T-cell (primary cell): ENCODE measurements at regions of chr1 and their contacts with region 1.

Region 1: GRCh38 chr1:248858891-248859889 is at the start of gene ZNF692:
- DNase-seq: peak; percentile 94 to 98 (median 97)
- ATAC-seq: peak; percentile 86 to 89 (median 87)
- H3K4me3 ChIP-seq: peak within 1 kb of the TSS; percentile 72 to 73
- H3K4me3 Mint-ChIP-seq: peak within 1 kb of the TSS; percentile 87 to 93 (median 93)
- H3K27ac ChIP-seq: peak within 1 kb of the TSS; percentile 88
- H3K27ac Mint-ChIP-seq: peak within 1 kb of the TSS; percentile 96 to 98
- H3K4me1 ChIP-seq: peaks cover 21 to 61% of the 10 kb centered on the region in 2 experiments
- H3K4me1 Mint-ChIP-seq: peaks cover 58 to 66% (median 61%) of the 10 kb centered on the region in 3 donors
- H3K27me3 ChIP-seq: no peaks in the 10 kb centered on the region
- H3K27me3 Mint-ChIP-seq: no peaks in the 10 kb centered on the region
- total RNA-seq, gene ZNF692: 53.9 to 88.1 (median 78.7) TPM

Region 2: DNA sequence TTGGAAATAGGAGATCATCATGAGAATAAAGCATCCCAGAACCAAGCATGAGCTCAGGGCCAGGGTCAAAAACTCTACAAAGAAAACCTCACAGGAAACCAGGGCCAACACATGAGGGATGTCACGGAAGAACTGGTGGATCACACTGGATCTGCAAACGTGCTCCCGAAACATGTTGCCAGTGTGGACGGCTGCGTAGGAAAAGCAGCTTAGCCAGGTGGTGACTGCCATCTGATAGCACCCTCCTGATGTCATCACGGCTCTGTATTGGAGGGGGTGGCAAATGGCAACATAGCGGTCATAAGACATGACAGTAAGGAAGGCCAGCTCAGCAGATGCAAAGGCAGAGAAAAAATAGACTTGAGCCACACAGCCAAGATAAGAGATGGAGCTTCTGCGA is 177.5 kb before region 1 on chr1:
- CTCF ChIA-PET with region 1: no interaction called
- POLR2A ChIA-PET with region 1: no interaction called
- DNase-seq: no peak
- ATAC-seq: no peak
- H3K4me3 ChIP-seq: no peak overlapping the region
- H3K4me3 Mint-ChIP-seq: no peak overlapping the region
- H3K27ac ChIP-seq: no peak overlapping the region
- H3K27ac Mint-ChIP-seq: no peak overlapping the region
- H3K4me1 ChIP-seq: no peaks in the 10 kb centered on the region
- H3K4me1 Mint-ChIP-seq: peaks cover under 1 to 2% (median under 1%) of the 10 kb centered on the region in 3 donors
- H3K27me3 ChIP-seq: peaks cover 0 to 9% of the 10 kb centered on the region in 2 experiments
- H3K27me3 Mint-ChIP-seq: peaks cover 9 to 21% of the 10 kb centered on the region in 2 donors

Region 3: GRCh38 chr1:248837794-248838356 is 21.3 kb before region 1 on chr1 and contains the start of gene ZNF672:
- CTCF ChIA-PET with region 1: interaction called in 1 of 2 experiments, 19 read pairs
- POLR2A ChIA-PET with region 1: interaction called, 4 to 6 read pairs
- DNase-seq: peak; percentile 85 to 94 (median 91)
- ATAC-seq: peak; percentile 86 to 90 (median 86)
- H3K4me3 ChIP-seq: peak within 1 kb of the TSS; percentile 79 to 87
- H3K4me3 Mint-ChIP-seq: no peak within 1 kb of the TSS
- H3K27ac ChIP-seq: peak within 1 kb of the TSS; percentile 97
- H3K27ac Mint-ChIP-seq: peak within 1 kb of the TSS; percentile 95 to 99
- H3K4me1 ChIP-seq: peaks cover 5 to 32% of the 10 kb centered on the region in 2 experiments
- H3K4me1 Mint-ChIP-seq: peaks cover 27 to 36% (median 29%) of the 10 kb centered on the region in 3 donors
- H3K27me3 ChIP-seq: peaks cover 0 to 3% of the 10 kb centered on the region in 2 experiments
- H3K27me3 Mint-ChIP-seq: peaks cover 0 to 4% of the 10 kb centered on the region in 2 donors
- total RNA-seq, gene ZNF672: 27.7 to 46.7 (median 42.1) TPM